Naive thymus-derived CD4-positive, alpha-beta T cell (primary cell): ENCODE measurements at regions of chr2 and their contacts with region 1.

Region 1: DNA sequence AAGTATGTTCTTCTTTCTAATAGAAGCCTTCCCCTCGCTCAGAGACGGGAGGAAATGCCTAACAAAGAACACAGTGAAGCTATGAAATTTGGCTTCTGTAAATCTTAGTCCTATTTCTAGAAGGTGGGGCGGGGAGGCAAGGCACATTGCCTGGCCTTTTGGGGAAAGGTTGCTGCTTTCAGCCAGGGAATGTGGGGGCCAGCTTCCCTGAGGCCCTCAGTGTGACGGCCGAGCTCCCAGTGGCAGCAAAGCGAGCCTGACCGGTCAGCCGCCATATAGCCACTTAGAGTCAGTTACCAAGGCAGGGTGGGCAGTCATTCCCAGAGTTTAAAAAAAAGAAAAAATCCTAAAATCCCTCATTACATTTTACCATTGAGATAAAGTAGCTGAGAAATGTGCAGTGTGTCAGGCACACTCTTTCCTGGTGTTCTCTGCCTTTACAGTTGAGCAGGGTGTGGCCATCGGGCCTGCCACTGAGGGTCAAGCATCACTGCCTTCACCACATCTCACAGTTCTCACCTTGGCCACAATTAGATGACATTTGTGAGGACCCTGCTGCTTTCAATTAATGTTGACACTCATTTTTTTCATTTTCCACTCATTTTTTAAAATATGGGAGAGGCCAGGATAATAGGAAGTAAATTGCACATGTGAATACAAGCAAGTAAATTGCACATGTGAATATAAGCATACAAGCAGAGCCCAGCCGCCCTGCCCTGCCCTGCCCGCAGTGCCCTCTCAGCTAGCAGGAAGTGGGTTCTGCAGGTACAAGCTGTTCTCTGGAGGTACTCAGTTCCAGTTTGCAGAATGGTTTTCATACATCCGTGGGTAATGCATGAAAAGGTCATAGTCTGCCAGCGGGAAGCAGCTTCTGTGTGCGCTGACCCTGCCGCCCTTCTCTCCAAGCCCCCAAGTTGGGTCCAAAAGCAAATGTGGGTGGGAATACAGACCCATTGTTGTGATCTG is 76.9 kb downstream of the WDSUB1 start:
- DNase-seq: peak in 6 of 9 donors; percentile 37 to 77 (median 65)
- ATAC-seq: peak; percentile 86
- H3K4me3 ChIP-seq: peak overlapping the region; percentile 38
- H3K4me3 Mint-ChIP-seq: peak overlapping the region in 9 of 10 donors; percentile 71 to 86 (median 80)
- H3K27ac ChIP-seq: no peak overlapping the region
- H3K27ac Mint-ChIP-seq: peak overlapping the region in 8 of 9 donors; percentile 59 to 94 (median 80)
- H3K4me1 ChIP-seq: peaks cover 18 to 21% of the 10 kb centered on the region in 2 donors
- H3K4me1 Mint-ChIP-seq: peaks cover 6 to 54% (median 44%) of the 10 kb centered on the region in 7 donors
- H3K27me3 ChIP-seq: no peaks in the 10 kb centered on the region
- H3K27me3 Mint-ChIP-seq: peaks cover 0 to 4% (median 0%) of the 10 kb centered on the region in 5 donors

Region 2: DNA sequence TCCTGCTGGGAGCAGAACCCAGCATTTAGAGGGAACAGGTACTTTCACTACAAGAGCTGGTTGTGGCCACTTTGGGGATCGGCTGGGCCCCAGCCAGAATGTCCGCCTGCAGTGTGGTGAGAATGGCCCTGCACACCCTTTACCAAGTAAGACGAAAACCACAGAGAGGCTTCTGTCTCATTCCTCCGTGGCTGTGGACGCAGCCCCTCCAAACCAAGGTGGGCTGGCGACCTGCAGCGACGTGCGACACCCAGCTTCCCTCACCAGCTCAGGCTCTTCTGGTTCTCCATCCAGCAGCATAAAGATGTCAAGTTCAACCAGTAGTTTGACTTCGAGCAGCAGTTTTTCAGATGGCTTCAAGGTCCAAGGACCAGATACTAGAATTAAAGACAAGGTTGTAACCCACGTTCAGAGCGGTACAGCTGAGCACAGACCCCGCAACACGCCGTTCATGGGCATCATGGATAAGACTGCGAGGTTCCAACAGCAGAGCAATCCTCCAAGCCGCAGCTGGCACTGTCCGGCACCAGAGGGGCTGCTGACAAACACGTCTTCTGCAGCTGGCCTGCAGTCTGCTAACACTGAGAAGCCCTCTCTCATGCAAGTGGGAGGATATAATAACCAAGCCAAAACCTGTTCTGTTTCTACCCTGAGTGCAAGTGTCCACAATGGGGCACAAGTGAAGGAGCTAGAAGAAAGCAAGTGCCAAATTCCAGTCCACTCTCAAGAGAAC is 20.7 kb after region 1 on chr2:
- CTCF ChIA-PET with region 1: no interaction called
- POLR2A ChIA-PET with region 1: no interaction called
- intact Hi-C with region 1: loop called in 1 of 2 experiments (anchors 2 kb)
- DNase-seq: no peak
- ATAC-seq: no peak
- H3K4me3 ChIP-seq: no peak overlapping the region
- H3K4me3 Mint-ChIP-seq: no peak overlapping the region
- H3K27ac ChIP-seq: no peak overlapping the region
- H3K27ac Mint-ChIP-seq: no peak overlapping the region
- H3K4me1 ChIP-seq: peaks cover 0 to 29% of the 10 kb centered on the region in 2 donors
- H3K4me1 Mint-ChIP-seq: peaks cover 3 to 30% (median 17%) of the 10 kb centered on the region in 7 donors
- H3K27me3 ChIP-seq: no peaks in the 10 kb centered on the region
- H3K27me3 Mint-ChIP-seq: no peaks in the 10 kb centered on the region